Activated CD4-positive, alpha-beta memory T cell treated with anti-CD3 and anti-CD28 coated beads for 36 hours (primary cell): ENCODE measurements at regions of chr7 and their contacts with region 1.

Region 1: DNA sequence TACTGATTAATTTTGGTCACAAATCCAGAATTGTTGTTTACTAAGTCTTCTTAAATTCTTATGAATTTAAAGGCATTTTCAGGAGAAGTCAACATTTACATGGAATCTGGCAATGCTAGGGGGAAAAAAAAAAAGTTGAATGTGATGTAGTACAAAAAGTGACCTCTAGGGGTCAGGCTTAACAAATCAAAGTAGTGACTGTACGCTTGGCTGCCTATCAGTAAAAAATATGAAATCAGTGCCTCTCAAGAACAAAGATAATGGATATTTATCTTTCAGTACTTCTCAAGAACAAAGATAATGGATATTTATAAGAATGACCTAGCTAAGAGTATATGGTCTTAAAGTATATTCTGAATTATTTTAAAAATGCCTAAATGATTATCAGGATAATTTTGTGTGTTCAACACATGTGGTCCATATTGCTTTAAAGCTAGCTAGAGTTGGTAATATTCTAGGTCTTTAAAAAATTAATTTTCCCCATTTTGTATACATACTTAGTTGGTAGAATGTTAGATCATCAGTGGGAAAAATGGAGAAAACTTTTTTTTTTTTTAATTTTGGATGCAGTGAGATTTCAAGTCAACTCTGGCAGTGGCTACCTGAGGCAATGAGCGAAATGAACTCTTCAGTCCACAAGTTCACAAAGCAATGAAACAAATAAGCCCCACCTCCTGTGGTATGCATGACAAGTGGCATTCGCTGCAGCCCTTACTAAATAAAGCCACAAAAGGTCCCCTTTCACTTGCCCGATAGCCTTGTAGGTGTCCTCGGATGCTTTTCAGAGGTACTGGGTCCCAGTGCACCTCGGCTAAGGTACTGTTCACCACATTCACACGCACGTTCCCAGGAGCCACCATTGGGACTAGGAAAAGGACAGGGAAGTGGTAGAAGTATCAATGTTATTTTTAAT is 51.2 kb upstream of the LAMB4 start:
- DNase-seq: no peak
- H3K4me3 Mint-ChIP-seq: no peak overlapping the region
- H3K27ac Mint-ChIP-seq: no peak overlapping the region
- H3K4me1 Mint-ChIP-seq: no peaks in the 10 kb centered on the region
- H3K27me3 Mint-ChIP-seq: peaks cover 2% of the 10 kb centered on the region

Region 2: DNA sequence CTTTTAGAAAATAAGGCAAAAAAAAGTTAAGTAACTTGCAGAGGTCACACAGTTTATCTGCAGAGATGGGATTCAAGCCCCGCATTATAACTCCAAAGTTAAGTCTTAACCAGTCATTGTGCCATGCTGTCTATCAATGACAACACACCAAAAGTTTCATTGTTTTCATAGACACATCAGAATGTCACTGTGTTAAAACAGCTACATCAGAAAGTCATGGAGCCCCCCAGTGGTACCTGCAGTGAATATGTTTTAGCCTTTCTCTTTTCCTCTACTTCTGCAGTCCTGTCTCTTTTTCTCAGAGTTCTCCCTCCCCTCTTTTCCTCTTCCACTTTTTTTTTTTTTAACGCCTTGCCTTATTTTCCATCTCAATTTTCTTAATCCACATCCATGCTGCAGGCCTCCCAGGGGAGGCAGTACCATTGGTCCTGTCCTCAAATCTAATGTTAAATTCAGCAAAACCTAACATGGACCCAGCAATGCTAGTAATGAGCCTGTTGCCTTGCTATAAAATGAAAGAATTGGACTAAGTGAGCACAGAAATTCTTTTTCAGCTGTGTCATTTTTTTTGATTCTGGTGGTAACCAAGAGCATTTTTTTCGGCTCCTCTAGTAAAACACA is 278.7 kb after region 1 on chr7:
- CTCF ChIA-PET with region 1: interaction called, 3 read pairs
- POLR2A ChIA-PET with region 1: no interaction called
- intact Hi-C with region 1: loop called (anchors 1 kb)
- DNase-seq: no peak
- H3K4me3 Mint-ChIP-seq: no peak overlapping the region
- H3K27ac Mint-ChIP-seq: no peak overlapping the region
- H3K4me1 Mint-ChIP-seq: peaks cover 16% of the 10 kb centered on the region
- H3K27me3 Mint-ChIP-seq: peaks cover 35% of the 10 kb centered on the region